ENCODE measurements at regions of chr19 and their contacts with region 1.

Region 1: DNA sequence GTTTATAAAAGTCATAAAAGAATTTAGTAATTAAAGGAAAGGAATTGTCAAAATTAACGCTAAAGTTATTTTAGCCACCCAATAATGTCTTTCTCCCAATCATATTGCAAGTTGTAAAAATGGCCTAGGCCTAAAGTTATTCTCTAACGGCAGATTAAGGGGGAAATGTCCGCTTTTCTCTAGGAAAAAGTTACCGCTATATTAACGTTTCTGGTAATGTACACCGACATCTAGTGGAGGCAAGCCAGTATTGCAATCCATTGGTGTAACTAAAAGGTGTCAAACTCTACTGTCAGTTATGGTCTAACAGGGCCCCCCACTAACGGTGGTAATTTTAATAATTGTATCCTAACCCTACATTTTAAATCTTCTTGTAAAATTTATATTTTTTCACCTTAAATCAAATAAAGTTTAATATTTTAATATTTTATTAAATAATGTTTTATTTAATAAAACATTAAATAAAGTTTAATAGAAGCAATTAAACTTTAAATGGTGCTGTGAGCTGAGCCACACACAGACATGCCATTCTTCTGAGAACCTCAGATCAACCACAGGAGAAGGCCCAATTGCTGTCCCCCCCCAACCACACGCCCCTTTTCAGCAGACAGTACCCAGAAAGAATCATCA is 35.9 kb upstream of the ZSCAN5A start:
- DNase-seq: peak in 1 of 2 experiments; percentile 52
- H3K4me3 ChIP-seq: no peak overlapping the region
- H3K27ac ChIP-seq: no peak overlapping the region
- H3K4me1 ChIP-seq: peaks cover 0 to 6% (median 4%) of the 10 kb centered on the region in 4 experiments; a peak in 6 of 7 replicates
- H3K27me3 ChIP-seq: no peaks in the 10 kb centered on the region; a peak in 1 of 7 replicates
- CTCF ChIP-seq: peak in 2 of 3 experiments; percentile 60 to 74; a peak in 3 of 4 replicates
- EP300 ChIP-seq: no peak
- POLR2A ChIP-seq: no peak
- RAD21 ChIP-seq: peak; percentile 71 to 76

Region 2: GRCh38 chr19:56066152-56067023 is 284.1 kb before region 1 on chr19:
- CTCF ChIA-PET with region 1: interaction called, 10 read pairs
- POLR2A ChIA-PET with region 1: no interaction called
- DNase-seq: peak in 1 of 2 experiments; percentile 94
- H3K4me3 ChIP-seq: peak overlapping the region in 2 of 4 experiments; percentile 5 to 48; a peak in 4 of 8 replicates
- H3K27ac ChIP-seq: no peak overlapping the region
- H3K4me1 ChIP-seq: peaks cover 0 to 3% (median 0%) of the 10 kb centered on the region in 4 experiments; a peak in 2 of 7 replicates
- H3K27me3 ChIP-seq: no peaks in the 10 kb centered on the region; a peak in 1 of 7 replicates
- CTCF ChIP-seq: peak; percentile 84 to 93 (median 89)
- EP300 ChIP-seq: no peak
- POLR2A ChIP-seq: no peak
- RAD21 ChIP-seq: peak; percentile 83

Region 3: GRCh38 chr19:56284746-56285145 is 65.8 kb before region 1 on chr19:
- CTCF ChIA-PET with region 1: no interaction called
- POLR2A ChIA-PET with region 1: no interaction called
- DNase-seq: no peak
- H3K4me3 ChIP-seq: no peak overlapping the region
- H3K27ac ChIP-seq: no peak overlapping the region
- H3K4me1 ChIP-seq: no peaks in the 10 kb centered on the region
- H3K27me3 ChIP-seq: peaks cover 0 to 2% (median 0%) of the 10 kb centered on the region in 4 experiments; a peak in 1 of 7 replicates
- CTCF ChIP-seq: no peak
- EP300 ChIP-seq: no peak
- POLR2A ChIP-seq: no peak
- RAD21 ChIP-seq: no peak

Region 4: GRCh38 chr19:56301886-56302620 is 48.5 kb before region 1 on chr19:
- CTCF ChIA-PET with region 1: no interaction called
- POLR2A ChIA-PET with region 1: no interaction called
- DNase-seq: no peak
- H3K4me3 ChIP-seq: no peak overlapping the region
- H3K27ac ChIP-seq: no peak overlapping the region
- H3K4me1 ChIP-seq: no peaks in the 10 kb centered on the region
- H3K27me3 ChIP-seq: no peaks in the 10 kb centered on the region
- CTCF ChIP-seq: no peak
- EP300 ChIP-seq: no peak
- POLR2A ChIP-seq: no peak
- RAD21 ChIP-seq: no peak

Region 5: GRCh38 chr19:56314562-56315077 is 35.9 kb before region 1 on chr19 and contains the start of gene ZSCAN5A:
- CTCF ChIA-PET with region 1: interaction called, 30 read pairs
- POLR2A ChIA-PET with region 1: no interaction called
- DNase-seq: peak; percentile 66 to 95
- H3K4me3 ChIP-seq: peak within 1 kb of the TSS; percentile 71 to 99 (median 90)
- H3K27ac ChIP-seq: peak within 1 kb of the TSS; percentile 98
- H3K4me1 ChIP-seq: peaks cover 0 to 3% (median 1%) of the 10 kb centered on the region in 4 experiments; a peak in 2 of 7 replicates
- H3K27me3 ChIP-seq: no peaks in the 10 kb centered on the region
- CTCF ChIP-seq: peak in 1 of 3 experiments; percentile 11; a peak in 1 of 4 replicates
- EP300 ChIP-seq: no peak
- POLR2A ChIP-seq: peak in 1 of 2 experiments; percentile 82; a peak in 2 of 3 replicates
- RAD21 ChIP-seq: no peak
- total RNA-seq, gene ZSCAN5A: 11.0 and 15.0 TPM in 2 replicates

Region 6: DNA sequence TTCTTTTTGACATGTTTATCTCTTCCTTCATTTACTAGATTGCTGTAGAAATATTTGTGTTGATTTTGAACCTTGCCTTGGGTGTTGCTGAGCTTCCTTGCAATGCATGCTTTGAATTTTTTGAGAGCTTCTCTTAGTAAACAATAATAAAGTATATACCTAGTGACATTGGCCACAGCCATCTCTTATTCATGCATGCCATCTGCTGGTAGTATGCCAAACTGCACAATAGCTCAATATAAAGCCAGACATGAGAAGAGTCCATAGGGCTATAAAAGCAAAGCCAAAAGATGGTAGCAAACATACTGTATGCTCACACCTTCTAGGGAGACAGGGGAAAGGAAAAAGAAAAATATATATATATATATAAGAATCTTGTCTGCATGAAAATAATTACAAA is 17.0 kb before region 1 on chr19:
- CTCF ChIA-PET with region 1: interaction called, 21 read pairs
- POLR2A ChIA-PET with region 1: interaction called, 3 read pairs
- DNase-seq: peak in 1 of 2 experiments; percentile 49
- H3K4me3 ChIP-seq: no peak overlapping the region
- H3K27ac ChIP-seq: no peak overlapping the region
- H3K4me1 ChIP-seq: no peaks in the 10 kb centered on the region
- H3K27me3 ChIP-seq: no peaks in the 10 kb centered on the region
- CTCF ChIP-seq: peak in 2 of 3 experiments; percentile 59 to 61; a peak in 3 of 4 replicates
- EP300 ChIP-seq: no peak
- POLR2A ChIP-seq: no peak
- RAD21 ChIP-seq: peak; percentile 81

Region 7: GRCh38 chr19:56367829-56368711 is 17.5 kb after region 1 on chr19:
- CTCF ChIA-PET with region 1: interaction called, 22 read pairs
- POLR2A ChIA-PET with region 1: interaction called, 14 read pairs
- DNase-seq: peak; percentile 93 to 96
- H3K4me3 ChIP-seq: peak overlapping the region; percentile 67 to 84 (median 80)
- H3K27ac ChIP-seq: peak overlapping the region; percentile 73
- H3K4me1 ChIP-seq: peaks cover 0 to 2% (median 0%) of the 10 kb centered on the region in 4 experiments; a peak in 2 of 7 replicates
- H3K27me3 ChIP-seq: no peaks in the 10 kb centered on the region
- CTCF ChIP-seq: 0 out of 4 replicates have a peak, but pooled peaks of 1 of the 3 experiments have one; percentile 0
- EP300 ChIP-seq: no peak
- POLR2A ChIP-seq: peak; percentile 75 to 83
- RAD21 ChIP-seq: no peak

Region 8: GRCh38 chr19:56393119-56394012 is 42.8 kb after region 1 on chr19 and contains the start of gene ZNF582:
- CTCF ChIA-PET with region 1: interaction called, 14 read pairs
- POLR2A ChIA-PET with region 1: no interaction called
- DNase-seq: peak; percentile 82 to 90
- H3K4me3 ChIP-seq: peak within 1 kb of the TSS; percentile 67 to 87 (median 76)
- H3K27ac ChIP-seq: peak within 1 kb of the TSS; percentile 98
- H3K4me1 ChIP-seq: no peaks in the 10 kb centered on the region
- H3K27me3 ChIP-seq: no peaks in the 10 kb centered on the region
- CTCF ChIP-seq: peak; percentile 74 to 90 (median 81)
- EP300 ChIP-seq: no peak
- POLR2A ChIP-seq: peak; percentile 84 to 98
- RAD21 ChIP-seq: peak in 1 of 2 experiments; percentile 49; a peak in 3 of 4 replicates
- total RNA-seq, gene ZNF582: 3.8 and 5.8 TPM in 2 replicates

Region 9: GRCh38 chr19:56398809-56399208 is 48.3 kb after region 1 on chr19:
- CTCF ChIA-PET with region 1: interaction called, 14 read pairs
- POLR2A ChIA-PET with region 1: no interaction called
- DNase-seq: no peak
- H3K4me3 ChIP-seq: no peak overlapping the region
- H3K27ac ChIP-seq: no peak overlapping the region
- H3K4me1 ChIP-seq: no peaks in the 10 kb centered on the region
- H3K27me3 ChIP-seq: no peaks in the 10 kb centered on the region
- CTCF ChIP-seq: no peak
- EP300 ChIP-seq: no peak
- POLR2A ChIP-seq: no peak
- RAD21 ChIP-seq: no peak

Measured in H1 (cell line).